ACHN (cell line): ENCODE measurements at regions of chr18 and their contacts with region 1.

Region 1: GRCh38 chr18:741931-742512 is 29.6 kb upstream of the ENOSF1 start:
- DNase-seq: peak; percentile 42

Region 2: DNA sequence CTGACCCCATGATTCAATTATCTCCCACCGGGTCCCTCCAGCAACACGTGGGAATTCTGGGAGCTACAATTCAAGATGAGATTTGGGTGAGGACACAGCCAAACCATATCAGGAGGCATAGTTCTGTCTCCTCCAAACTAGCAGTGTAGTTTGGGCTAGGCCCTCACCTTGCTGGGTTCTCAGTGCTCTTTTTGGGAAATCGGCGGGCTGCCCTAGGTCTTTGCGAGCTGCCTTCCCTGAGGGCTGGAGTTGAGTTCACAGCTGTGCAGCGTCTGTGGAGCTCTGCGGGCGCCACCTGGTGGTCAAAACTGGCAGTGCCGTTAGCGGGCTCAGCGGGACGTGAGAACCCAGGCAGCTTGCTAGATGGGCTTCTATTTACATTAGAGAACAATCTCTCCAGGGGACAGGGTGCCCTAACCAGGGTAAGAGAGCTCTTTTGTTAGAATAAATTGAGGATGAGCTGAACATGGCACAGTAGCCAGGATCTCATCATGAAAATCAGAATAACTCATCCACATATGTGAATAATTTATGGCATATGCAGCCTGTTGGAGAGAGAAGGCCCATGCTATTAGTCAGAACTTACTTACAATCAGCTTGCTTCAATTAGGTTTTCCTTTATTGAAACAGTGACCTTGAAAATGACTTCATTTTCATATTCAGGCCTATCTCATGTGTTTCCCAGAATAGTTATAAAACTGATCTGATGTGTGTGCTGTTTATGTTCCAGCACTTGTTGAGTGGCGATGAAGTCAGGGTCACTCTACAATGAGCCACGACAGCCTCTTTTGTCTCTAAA is 97.4 kb after region 1 on chr18:
- in situ Hi-C with region 1: loop called (anchors 25 kb)
- DNase-seq: peak; percentile 74

Region 3: DNA sequence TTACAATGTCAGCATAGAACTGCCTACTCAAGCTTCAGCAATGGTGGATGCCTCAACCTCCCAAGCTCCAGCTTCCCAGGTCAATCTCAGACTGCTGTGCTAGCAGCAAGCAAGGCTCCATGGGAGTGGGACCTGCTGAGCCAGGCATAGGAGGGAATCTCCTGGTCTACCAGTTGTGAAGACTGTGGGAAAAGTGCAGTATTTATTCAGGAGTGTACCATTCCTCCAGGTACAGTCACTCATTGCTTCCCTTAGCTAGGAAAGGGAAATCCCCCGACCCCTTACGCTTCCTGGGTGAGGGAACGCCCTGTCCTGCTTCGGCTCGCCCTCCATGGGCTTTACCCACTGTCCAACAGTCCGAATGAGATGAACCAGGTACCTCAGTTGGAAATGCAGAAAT is 292.9 kb after region 1 on chr18:
- in situ Hi-C with region 1: no loop called
- DNase-seq: no peak